ENCODE measurements at regions of chr16 and their contacts with region 1.

Region 1: DNA sequence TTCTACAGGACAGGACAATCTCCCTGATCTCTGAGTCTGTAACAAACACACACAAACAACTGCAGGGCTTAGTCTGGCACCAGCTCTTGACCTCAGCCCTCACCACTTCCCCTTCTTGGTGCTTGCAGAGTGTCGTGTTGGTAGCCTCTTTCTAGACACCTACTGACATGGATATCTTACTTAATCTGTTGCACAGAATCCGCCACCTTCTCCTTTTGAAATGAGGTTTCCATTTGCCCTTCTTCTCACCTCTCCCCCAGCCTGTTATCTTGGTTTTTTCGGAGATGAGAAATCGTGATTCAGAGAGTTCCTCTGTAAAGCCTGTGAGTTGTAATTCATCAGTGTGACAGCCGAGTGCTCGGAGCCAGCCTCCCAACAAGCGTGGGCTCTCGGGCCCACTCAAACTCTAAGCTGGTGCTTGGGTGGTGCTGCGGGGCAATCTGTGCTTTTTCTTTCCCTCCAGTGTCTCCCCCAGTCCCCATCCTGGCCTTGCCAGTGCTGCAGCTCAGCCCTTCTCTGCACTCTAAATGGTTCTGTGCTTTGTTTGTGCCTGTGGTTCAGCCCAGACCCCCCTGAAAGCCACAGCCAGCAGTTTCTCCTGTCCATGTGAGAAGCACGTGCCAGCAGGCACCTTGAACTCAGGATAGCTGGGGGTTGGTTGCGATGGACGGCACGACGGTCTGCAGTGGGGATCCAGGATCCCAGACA is 28.1 kb downstream of the KIAA0513 start:
- DNase-seq: peak; percentile 88
- ATAC-seq: peak; percentile 92
- H3K4me3 Mint-ChIP-seq: peak overlapping the region; percentile 61
- H3K27ac Mint-ChIP-seq: peak overlapping the region; percentile 88
- H3K4me1 Mint-ChIP-seq: peaks cover 57% of the 10 kb centered on the region
- H3K27me3 Mint-ChIP-seq: no peaks in the 10 kb centered on the region

Region 2: GRCh38 chr16:85010931-85011845 is 44.5 kb before region 1 on chr16 and contains the start of gene ZDHHC7:
- CTCF ChIA-PET with region 1: interaction called, 5 read pairs
- POLR2A ChIA-PET with region 1: interaction called, 4 read pairs
- intact Hi-C with region 1: loop called (anchors 1 to 5 kb)
- DNase-seq: peak; percentile 92
- ATAC-seq: peak; percentile 95
- H3K4me3 Mint-ChIP-seq: peak within 1 kb of the TSS; percentile 89
- H3K27ac Mint-ChIP-seq: peak within 1 kb of the TSS; percentile 98
- H3K4me1 Mint-ChIP-seq: peaks cover 30% of the 10 kb centered on the region
- H3K27me3 Mint-ChIP-seq: no peaks in the 10 kb centered on the region
- total RNA-seq, gene ZDHHC7: 25.1 to 27.8 TPM

Measured in activated CD4-positive, alpha-beta T cell treated with anti-CD3 and anti-CD28 coated beads for 36 hours (primary cell).